ENCODE measurements at regions of chr20 and their contacts with region 1.

Region 1: GRCh38 chr20:49610701-49611538 is 43.0 kb upstream of the PTGIS start:
- DNase-seq: peak; percentile 83
- H3K4me3 Mint-ChIP-seq: peak overlapping the region; percentile 13
- H3K27ac Mint-ChIP-seq: no peak overlapping the region
- H3K4me1 Mint-ChIP-seq: peaks cover 29% of the 10 kb centered on the region
- H3K27me3 Mint-ChIP-seq: no peaks in the 10 kb centered on the region

Region 2: GRCh38 chr20:49541733-49542513 is 69.0 kb before region 1 on chr20:
- CTCF ChIA-PET with region 1: interaction called, 343 read pairs
- POLR2A ChIA-PET with region 1: interaction called, 127 read pairs
- DNase-seq: peak; percentile 84
- H3K4me3 Mint-ChIP-seq: no peak overlapping the region
- H3K27ac Mint-ChIP-seq: peak overlapping the region; percentile 80
- H3K4me1 Mint-ChIP-seq: peaks cover 33% of the 10 kb centered on the region
- H3K27me3 Mint-ChIP-seq: peaks cover 2% of the 10 kb centered on the region

Region 3: DNA sequence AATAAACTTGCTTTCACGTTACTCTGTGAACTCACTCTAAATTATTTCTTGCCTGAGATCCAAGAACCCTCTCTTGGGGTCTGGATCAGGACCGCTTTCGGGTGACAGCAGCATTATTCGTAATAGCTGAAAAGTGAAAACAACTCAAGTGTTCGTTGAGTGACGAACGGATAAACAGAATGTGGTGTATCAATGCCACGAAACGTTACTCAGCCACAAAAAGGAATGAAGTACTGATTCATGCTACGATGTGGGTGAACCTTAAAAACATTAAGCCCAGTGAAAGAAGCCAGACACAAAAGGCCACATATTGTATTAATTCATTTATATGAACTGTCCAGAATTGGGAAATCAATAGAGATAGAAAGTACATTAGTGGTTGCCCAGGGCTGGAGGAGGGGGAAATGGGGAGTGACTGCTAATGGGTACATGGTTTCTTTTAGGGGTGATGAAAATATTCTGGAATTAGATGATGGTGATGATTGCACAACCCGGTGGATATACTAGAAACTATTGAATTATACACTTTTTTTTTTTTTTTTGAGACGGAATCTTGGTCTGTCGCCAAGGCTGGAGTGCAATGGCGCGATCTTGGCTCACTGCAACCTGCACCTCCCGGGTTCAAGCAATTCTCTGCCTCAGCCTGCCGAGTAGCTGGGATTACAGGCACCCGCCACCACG is 51.4 kb before region 1 on chr20:
- CTCF ChIA-PET with region 1: interaction called, 12 read pairs
- POLR2A ChIA-PET with region 1: no interaction called
- DNase-seq: peak; percentile 2
- H3K4me3 Mint-ChIP-seq: no peak overlapping the region
- H3K27ac Mint-ChIP-seq: no peak overlapping the region
- H3K4me1 Mint-ChIP-seq: peaks cover 13% of the 10 kb centered on the region
- H3K27me3 Mint-ChIP-seq: peaks cover 48% of the 10 kb centered on the region

Region 4: GRCh38 chr20:49846206-49846807 is 235.4 kb after region 1 on chr20:
- CTCF ChIA-PET with region 1: interaction called, 89 read pairs
- POLR2A ChIA-PET with region 1: interaction called, 6 read pairs
- DNase-seq: peak; percentile 50
- H3K4me3 Mint-ChIP-seq: no peak overlapping the region
- H3K27ac Mint-ChIP-seq: no peak overlapping the region
- H3K4me1 Mint-ChIP-seq: peaks cover 18% of the 10 kb centered on the region
- H3K27me3 Mint-ChIP-seq: no peaks in the 10 kb centered on the region

Region 5: GRCh38 chr20:49888345-49888966 is 277.5 kb after region 1 on chr20:
- CTCF ChIA-PET with region 1: interaction called, 17 read pairs
- POLR2A ChIA-PET with region 1: interaction called, 4 read pairs
- DNase-seq: peak; percentile 62
- H3K4me3 Mint-ChIP-seq: no peak overlapping the region
- H3K27ac Mint-ChIP-seq: peak overlapping the region; percentile 8
- H3K4me1 Mint-ChIP-seq: peaks cover 24% of the 10 kb centered on the region
- H3K27me3 Mint-ChIP-seq: no peaks in the 10 kb centered on the region

Region 6: DNA sequence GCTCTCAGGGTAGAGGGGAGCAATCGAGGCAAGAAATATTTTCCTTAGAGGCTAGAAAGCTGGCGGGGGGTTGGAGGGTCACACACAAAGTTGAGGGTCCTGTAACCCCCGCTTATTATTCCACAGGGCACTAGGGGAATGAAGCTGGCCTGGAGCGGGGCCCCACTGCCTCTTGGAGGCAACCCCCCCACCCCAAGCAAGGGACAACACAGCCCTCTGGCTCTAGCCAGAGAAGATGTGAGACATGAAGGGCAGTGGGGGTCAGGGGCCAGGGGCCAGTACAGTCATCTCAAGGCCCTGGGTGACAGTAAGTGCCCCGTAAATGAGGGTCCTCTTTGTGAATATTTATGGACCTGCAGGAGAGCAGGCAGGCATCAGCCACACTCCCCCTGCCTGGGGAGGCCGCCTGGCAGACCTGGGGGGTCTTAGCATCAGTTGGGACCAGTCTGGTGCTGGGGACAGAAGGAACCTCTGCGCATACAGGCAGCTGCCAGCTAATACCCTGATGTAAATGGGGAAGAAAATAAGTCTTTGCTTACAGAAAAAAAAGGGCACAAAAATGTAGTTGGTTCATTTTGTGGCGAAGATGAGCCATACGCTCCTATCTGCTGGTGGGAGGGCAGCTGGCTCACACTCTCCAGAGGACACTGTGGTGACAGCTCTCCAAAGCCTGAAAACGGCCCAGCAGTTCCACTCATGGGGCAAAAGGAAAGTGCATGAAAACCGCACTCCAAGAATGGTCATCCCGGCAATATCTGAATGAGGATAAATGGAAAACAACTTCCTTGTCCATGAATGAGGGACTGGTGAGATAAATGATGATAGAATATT is 282.5 kb after region 1 on chr20:
- CTCF ChIA-PET with region 1: interaction called, 17 read pairs
- POLR2A ChIA-PET with region 1: interaction called, 3 read pairs
- DNase-seq: peak; percentile 48
- H3K4me3 Mint-ChIP-seq: peak overlapping the region; percentile 61
- H3K27ac Mint-ChIP-seq: peak overlapping the region; percentile 81
- H3K4me1 Mint-ChIP-seq: peaks cover 36% of the 10 kb centered on the region
- H3K27me3 Mint-ChIP-seq: no peaks in the 10 kb centered on the region